ENCODE measurements at regions of chr3 and their contacts with region 1.

Region 1: GRCh38 chr3:43105596-43106292 is at the start of gene POMGNT2:
- DNase-seq: peak; percentile 45 to 91
- H3K4me3 ChIP-seq: peak within 1 kb of the TSS; percentile 76 to 98
- H3K27ac ChIP-seq: peak within 1 kb of the TSS in 1 of 2 donors; percentile 59
- H3K4me1 ChIP-seq: peaks cover 3 to 8% of the 10 kb centered on the region in 2 donors
- H3K27me3 ChIP-seq: no peaks in the 10 kb centered on the region
- CTCF ChIP-seq: no peak
- total RNA-seq, gene POMGNT2: 14.5 TPM

Region 2: DNA sequence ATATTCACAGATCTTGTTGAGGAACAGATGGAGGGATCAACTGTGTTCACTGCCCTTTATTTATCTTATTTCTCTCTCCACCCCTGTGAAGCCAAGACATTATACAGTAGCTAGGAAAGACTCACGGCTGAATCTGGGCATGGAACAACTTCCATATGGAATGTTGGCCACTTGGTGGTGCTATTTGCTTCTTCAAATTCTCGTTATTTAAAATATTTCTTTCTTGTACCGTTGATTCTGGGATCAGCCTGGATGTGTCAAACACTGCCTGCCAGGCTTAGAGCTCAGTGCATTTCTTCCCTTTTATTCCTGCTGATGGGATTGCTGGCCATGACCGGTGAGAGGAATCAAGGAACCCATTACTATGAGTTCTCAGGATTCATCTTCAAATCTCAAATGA is 144.1 kb before region 1 on chr3:
- intact Hi-C with region 1: loop called (anchors 5 kb)
- DNase-seq: peak in 1 of 2 donors; percentile 71
- H3K4me3 ChIP-seq: no peak overlapping the region
- H3K27ac ChIP-seq: no peak overlapping the region
- H3K4me1 ChIP-seq: no peaks in the 10 kb centered on the region
- H3K27me3 ChIP-seq: no peaks in the 10 kb centered on the region
- CTCF ChIP-seq: peak; percentile 53 to 71 (median 56)

Region 3: DNA sequence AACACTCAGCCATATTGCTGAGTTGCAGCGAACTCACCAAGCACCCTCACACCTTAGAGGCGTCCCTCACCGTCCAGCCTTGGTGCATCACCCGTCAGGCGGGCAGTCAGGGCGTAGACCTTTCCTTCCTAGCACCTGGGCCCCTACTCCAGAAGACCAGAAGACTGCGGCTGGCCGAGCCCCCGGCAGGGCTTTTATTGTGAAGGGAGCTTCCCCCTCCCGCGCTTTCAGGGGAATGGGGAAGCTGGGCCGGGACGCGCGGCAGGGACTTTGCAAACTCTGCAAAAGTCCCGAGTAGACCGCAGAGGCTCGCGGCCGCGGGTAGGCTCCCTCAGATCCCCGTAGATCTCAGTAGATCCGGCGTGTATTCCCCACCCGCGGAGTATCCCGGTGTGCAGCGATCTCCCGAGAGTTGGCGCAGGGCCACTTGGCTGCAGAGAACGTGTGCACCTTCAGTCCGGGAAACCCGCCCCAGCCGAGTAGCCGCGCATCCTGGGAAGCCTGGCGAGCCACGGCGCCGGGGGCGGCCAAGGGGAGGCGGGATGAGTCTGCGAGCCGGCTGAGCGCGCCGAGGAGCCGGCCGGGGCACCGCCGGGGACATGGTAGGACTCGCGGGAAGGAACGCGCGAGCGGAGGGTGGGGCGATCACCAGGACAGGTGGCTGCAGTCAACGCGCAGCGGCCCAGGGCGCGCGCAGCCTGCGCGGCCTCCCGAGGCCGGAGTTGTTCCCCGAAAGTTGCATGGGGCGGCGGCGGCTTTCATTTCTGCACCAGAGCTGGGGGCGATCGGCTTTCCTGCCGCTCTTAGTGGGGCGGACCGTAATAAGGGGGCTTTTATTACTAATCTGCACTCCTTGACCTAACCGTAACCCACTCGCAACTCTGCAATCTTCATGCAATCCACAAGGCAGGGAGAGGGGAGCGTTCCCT is 126.4 kb before region 1 on chr3 and contains the start of gene GASK1A:
- intact Hi-C with region 1: loop called (anchors 5 kb)
- DNase-seq: peak in 1 of 2 donors; percentile 76
- H3K4me3 ChIP-seq: peak within 1 kb of the TSS; percentile 78 to 83
- H3K27ac ChIP-seq: peak within 1 kb of the TSS in 1 of 2 donors; percentile 31
- H3K4me1 ChIP-seq: peaks cover 0 to 9% of the 10 kb centered on the region in 2 donors
- H3K27me3 ChIP-seq: no peaks in the 10 kb centered on the region
- CTCF ChIP-seq: no peak
- total RNA-seq, gene GASK1A: 25.8 TPM

Region 4: DNA sequence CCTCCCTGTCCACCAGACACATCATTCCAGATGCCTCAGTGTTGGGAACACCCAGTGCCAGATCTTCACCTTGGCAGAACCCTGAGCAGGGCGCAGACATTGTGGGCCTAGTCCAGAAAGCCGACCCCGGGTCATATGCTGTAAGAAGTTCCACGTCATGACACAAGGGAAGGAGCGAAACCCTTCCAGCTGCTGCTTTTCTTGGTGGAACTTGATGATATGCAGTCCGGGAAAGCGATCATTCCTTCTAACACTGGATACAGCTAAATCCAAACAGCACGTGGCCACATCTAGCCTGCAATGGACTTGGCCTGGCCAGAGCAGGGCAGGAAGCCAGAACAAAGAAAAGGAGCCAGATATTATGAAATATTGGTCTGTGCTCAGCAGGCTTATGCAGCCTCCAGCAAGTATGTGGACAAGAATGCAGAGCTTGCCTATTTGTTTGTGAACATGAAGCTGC is 104.6 kb before region 1 on chr3:
- intact Hi-C with region 1: loop called (anchors 5 kb)
- DNase-seq: peak; percentile 69 to 94
- H3K4me3 ChIP-seq: peak overlapping the region in 1 of 2 donors; percentile 29
- H3K27ac ChIP-seq: peak overlapping the region; percentile 50 to 86
- H3K4me1 ChIP-seq: peaks cover 20 to 23% of the 10 kb centered on the region in 2 donors
- H3K27me3 ChIP-seq: no peaks in the 10 kb centered on the region
- CTCF ChIP-seq: no peak

Region 5: GRCh38 chr3:43286115-43286840 is 180.5 kb after region 1 on chr3 and contains the start of gene SNRK:
- intact Hi-C with region 1: loop called (anchors 2 kb)
- DNase-seq: peak; percentile 20 to 91
- H3K4me3 ChIP-seq: peak within 1 kb of the TSS; percentile 79 to 86
- H3K27ac ChIP-seq: peak within 1 kb of the TSS; percentile 58 to 84
- H3K4me1 ChIP-seq: peaks cover 0 to 12% of the 10 kb centered on the region in 2 donors
- H3K27me3 ChIP-seq: no peaks in the 10 kb centered on the region
- CTCF ChIP-seq: peak in 2 of 3 experiments; percentile 8 to 31
- total RNA-seq, gene SNRK: 44.3 TPM